ENCODE measurements at regions of chr5 and their contacts with region 1.

Region 1: DNA sequence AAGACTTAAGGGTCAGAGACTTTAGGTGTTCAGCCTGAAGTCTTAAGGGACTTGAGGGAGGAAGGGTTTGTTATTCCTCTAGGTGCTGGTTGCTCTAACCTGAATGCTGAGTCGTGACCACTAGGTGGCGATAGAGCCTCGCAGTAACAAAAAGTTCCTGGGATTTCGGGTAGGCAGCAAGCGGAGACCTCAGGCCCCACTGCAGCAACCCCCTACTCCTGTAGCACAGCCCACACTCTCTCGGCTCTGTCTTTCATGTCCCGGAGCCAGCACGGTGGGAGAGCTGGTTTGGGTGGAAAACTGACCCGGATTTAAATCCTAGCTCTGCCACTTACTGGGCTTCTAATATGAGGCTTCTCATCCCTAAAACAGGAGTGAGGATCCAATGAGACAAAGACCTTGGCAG is 100.3 kb upstream of the PANK3 start:
- DNase-seq: peak; percentile 70
- ATAC-seq: peak; percentile 82
- H3K4me3 ChIP-seq: no peak overlapping the region
- H3K27ac ChIP-seq: no peak overlapping the region
- H3K4me1 ChIP-seq: no peaks in the 10 kb centered on the region
- H3K27me3 ChIP-seq: no peaks in the 10 kb centered on the region; the same call in 1 of the 2 replicates
- CTCF ChIP-seq: peak; percentile 83
- POLR2A ChIP-seq: no peak
- RAD21 ChIP-seq: peak; percentile 84

Region 2: DNA sequence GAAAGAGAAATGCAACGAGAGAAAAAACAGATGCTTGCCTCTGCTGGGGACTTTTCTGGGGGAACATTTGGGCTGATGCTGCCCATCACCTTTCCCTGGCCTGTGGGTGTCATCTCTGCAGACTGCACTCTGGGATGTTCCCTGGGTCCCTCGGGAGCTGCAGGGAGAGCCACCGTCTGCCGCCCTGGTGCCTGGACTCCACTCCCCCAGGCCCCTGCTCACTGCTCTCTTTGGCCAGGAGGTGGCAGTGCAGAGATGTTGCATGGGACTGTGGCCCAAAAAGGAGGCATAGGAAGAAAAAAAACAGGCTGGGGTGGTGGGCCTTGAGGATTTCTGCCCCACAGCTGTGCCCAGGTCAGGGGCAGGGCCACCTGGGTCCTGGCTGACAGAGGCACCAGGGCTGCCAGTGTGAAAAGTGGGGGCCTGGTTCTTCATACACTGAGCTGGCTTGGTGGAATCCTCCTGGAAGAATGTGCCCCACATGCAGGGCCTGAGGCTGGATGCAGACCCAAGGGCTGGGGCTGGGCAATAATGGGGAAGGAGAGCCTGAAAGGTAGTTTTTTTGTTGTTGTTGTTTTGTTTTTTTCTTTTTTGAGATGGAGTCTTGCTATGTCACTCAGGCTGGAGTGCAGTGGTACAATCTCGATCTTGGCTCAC is 267.8 kb after region 1 on chr5:
- CTCF ChIA-PET with region 1: no interaction called
- POLR2A ChIA-PET with region 1: no interaction called
- dilution Hi-C with region 1: no loop called
- in situ Hi-C with region 1: no loop called
- intact Hi-C with region 1: loop called (anchors 1 kb)
- DNase-seq: peak; percentile 13
- ATAC-seq: peak; percentile 87
- H3K4me3 ChIP-seq: no peak overlapping the region
- H3K27ac ChIP-seq: peak overlapping the region; percentile 23; the same call in 1 of the 2 replicates
- H3K4me1 ChIP-seq: no peaks in the 10 kb centered on the region
- H3K27me3 ChIP-seq: no peaks in the 10 kb centered on the region; the same call in 1 of the 2 replicates
- CTCF ChIP-seq: peak; percentile 56
- POLR2A ChIP-seq: no peak
- RAD21 ChIP-seq: peak; percentile 35

Region 3: DNA sequence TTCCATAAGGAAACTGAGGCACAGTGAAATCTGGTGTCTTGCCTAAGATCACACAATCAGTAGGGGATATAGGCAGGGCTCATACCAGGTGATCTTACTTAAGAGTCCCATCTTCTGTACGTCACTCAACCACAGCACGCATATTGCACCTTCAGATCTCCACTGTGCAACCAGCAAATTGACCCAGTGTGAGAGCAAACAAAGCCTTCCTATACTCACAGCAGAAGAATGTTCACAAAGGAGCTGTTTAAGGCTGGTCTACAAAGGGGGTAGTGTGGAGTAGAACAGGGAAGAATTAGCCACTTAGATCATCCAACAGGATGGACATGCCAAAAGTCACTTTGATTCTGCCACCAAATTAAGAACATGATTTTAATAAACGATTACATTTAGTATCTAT is 315.5 kb after region 1 on chr5:
- CTCF ChIA-PET with region 1: no interaction called
- POLR2A ChIA-PET with region 1: no interaction called
- dilution Hi-C with region 1: no loop called
- in situ Hi-C with region 1: no loop called
- intact Hi-C with region 1: no loop called
- DNase-seq: no peak
- ATAC-seq: no peak
- H3K4me3 ChIP-seq: no peak overlapping the region
- H3K27ac ChIP-seq: no peak overlapping the region
- H3K4me1 ChIP-seq: no peaks in the 10 kb centered on the region
- H3K27me3 ChIP-seq: no peaks in the 10 kb centered on the region; the same call in 1 of the 2 replicates
- CTCF ChIP-seq: no peak
- POLR2A ChIP-seq: no peak
- RAD21 ChIP-seq: no peak

Region 4: GRCh38 chr5:169302491-169303118 is 623.1 kb after region 1 on chr5:
- CTCF ChIA-PET with region 1: no interaction called
- POLR2A ChIA-PET with region 1: no interaction called
- dilution Hi-C with region 1: no loop called
- in situ Hi-C with region 1: loop called (anchors 10 kb)
- intact Hi-C with region 1: loop called (anchors 1 kb)
- DNase-seq: peak; percentile 73
- ATAC-seq: peak; percentile 76
- H3K4me3 ChIP-seq: no peak overlapping the region
- H3K27ac ChIP-seq: no peak overlapping the region
- H3K4me1 ChIP-seq: no peaks in the 10 kb centered on the region
- H3K27me3 ChIP-seq: peaks cover 30% of the 10 kb centered on the region
- CTCF ChIP-seq: peak; percentile 80
- POLR2A ChIP-seq: no peak
- RAD21 ChIP-seq: peak; percentile 63

Region 5: GRCh38 chr5:169548315-169548714 is 868.8 kb after region 1 on chr5:
- CTCF ChIA-PET with region 1: no interaction called
- POLR2A ChIA-PET with region 1: no interaction called
- dilution Hi-C with region 1: no loop called
- in situ Hi-C with region 1: loop called (anchors 25 kb)
- intact Hi-C with region 1: loop called (anchors 1 kb)
- DNase-seq: peak; percentile 24
- ATAC-seq: peak; percentile 46
- H3K4me3 ChIP-seq: no peak overlapping the region
- H3K27ac ChIP-seq: no peak overlapping the region
- H3K4me1 ChIP-seq: no peaks in the 10 kb centered on the region
- H3K27me3 ChIP-seq: no peaks in the 10 kb centered on the region; the same call in 1 of the 2 replicates
- CTCF ChIP-seq: peak; percentile 48
- POLR2A ChIP-seq: no peak
- RAD21 ChIP-seq: peak; percentile 62

Region 6: DNA sequence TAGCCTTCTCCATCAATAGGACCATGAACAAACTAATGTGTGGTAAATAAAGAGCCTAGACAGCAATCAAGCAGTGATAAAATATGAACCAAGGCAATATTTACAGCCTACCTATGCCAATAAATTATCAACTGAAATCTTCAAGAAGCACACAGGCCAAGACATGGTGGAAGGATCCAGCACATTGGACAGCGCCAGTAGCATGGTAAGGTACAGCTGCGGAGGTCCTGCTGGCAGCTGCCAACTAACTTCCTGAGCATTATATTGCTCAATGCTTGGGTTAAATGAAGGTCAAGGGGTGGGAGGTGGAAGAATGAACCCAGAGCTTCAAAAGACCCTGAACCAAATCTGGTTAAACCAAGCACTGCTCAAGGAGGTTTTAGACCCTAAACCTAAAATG is 887.6 kb after region 1 on chr5:
- CTCF ChIA-PET with region 1: no interaction called
- POLR2A ChIA-PET with region 1: no interaction called
- dilution Hi-C with region 1: no loop called
- in situ Hi-C with region 1: loop called (anchors 25 kb)
- intact Hi-C with region 1: no loop called
- DNase-seq: peak; percentile 10
- ATAC-seq: no peak
- H3K4me3 ChIP-seq: no peak overlapping the region
- H3K27ac ChIP-seq: no peak overlapping the region
- H3K4me1 ChIP-seq: no peaks in the 10 kb centered on the region
- H3K27me3 ChIP-seq: peaks cover 8% of the 10 kb centered on the region
- CTCF ChIP-seq: no peak
- POLR2A ChIP-seq: no peak
- RAD21 ChIP-seq: no peak

Region 7: DNA sequence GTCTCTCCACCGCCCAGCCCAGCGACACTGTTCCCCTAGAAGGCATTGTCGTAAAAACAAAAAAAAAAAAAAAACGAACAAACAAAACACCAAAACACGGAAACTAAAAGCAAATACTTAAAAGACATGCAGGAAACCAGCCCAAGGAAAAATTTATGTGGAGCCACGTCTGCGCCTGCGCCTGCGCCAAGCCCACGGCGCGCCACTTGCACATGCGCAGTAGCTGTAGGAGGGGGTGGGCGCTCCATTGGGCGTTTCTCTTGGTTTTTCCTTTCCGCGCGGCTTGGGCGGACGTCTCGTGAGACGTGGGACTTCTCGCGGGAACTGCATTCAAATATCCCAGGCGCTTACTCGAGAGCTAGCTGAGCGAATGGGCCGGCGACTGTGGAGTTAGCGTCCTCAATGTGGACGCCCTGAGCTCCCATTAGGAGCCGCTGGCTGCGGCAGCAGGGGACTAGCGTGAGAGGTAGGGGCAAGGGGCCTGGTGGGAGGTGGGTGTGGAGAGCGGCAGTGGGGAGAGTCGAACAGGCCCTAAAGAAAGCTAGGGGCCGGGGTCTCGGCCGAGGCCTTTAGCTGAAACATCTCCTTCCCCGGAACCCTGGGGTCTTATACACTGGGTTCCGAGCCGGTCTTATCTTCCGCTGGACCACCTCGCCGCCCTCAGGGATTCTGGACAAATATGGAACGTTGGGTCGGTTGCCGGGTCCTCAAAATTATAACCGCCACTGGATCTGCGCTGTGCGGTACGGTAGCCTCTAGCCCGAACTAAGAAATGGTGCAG is 904.1 kb after region 1 on chr5 and contains the start of gene SPDL1:
- CTCF ChIA-PET with region 1: no interaction called
- POLR2A ChIA-PET with region 1: no interaction called
- dilution Hi-C with region 1: no loop called
- in situ Hi-C with region 1: no loop called
- intact Hi-C with region 1: loop called (anchors 1 kb)
- DNase-seq: peak; percentile 95
- ATAC-seq: peak; percentile 95
- H3K4me3 ChIP-seq: peak within 1 kb of the TSS; percentile 66
- H3K27ac ChIP-seq: peak within 1 kb of the TSS; percentile 72
- H3K4me1 ChIP-seq: peaks cover 2% of the 10 kb centered on the region; the same call in 1 of the 2 replicates
- H3K27me3 ChIP-seq: no peaks in the 10 kb centered on the region
- CTCF ChIP-seq: no peak
- POLR2A ChIP-seq: peak; percentile 87
- RAD21 ChIP-seq: no peak
- total RNA-seq, gene SPDL1: 18.8 and 48.6 TPM in 2 replicates

Measured in IMR-90 (cell line).